Posterior vena cava (tissue), 2 donors: ENCODE measurements at regions of chr10 and their contacts with region 1.

Region 1: DNA sequence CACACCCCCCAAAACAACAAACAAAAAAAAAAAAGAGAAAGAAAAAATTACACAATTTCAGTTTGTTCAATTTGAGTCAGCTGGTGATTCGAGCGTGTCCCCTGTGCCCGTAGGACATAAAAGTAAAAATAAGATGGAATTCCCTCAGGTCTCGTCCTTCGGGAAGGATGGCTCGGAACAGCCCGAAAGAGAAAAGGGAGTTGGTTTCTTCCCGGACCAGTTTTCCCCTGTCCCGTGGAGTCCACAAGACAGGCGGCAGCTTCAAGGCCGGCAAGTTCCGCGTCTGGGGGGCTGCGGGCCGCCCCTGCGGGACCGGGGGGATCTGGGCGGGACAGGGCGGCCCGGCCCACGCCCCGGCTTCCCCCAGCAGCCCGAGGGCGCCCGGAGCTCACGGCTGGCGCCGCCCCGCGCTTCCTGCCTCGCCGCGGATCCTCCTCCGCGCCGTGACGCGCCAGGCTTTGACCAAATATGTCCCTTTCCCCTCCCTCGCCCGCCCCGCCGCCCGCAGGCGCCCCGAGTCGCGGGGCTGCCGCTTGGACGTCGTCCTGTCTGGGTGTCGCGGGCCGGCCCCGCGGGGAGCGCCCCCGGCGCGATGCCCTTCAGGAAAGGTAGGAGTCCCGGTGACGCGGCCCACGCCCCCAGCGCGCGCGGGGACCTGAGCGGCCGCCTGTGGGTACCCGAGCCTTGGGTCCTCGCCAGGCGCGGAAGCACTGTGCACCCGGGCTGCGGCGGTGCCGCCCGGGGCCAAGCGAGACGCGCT is 55.8 kb downstream of the RBM17 start:
- DNase-seq: peak; percentile 97

Region 2: DNA sequence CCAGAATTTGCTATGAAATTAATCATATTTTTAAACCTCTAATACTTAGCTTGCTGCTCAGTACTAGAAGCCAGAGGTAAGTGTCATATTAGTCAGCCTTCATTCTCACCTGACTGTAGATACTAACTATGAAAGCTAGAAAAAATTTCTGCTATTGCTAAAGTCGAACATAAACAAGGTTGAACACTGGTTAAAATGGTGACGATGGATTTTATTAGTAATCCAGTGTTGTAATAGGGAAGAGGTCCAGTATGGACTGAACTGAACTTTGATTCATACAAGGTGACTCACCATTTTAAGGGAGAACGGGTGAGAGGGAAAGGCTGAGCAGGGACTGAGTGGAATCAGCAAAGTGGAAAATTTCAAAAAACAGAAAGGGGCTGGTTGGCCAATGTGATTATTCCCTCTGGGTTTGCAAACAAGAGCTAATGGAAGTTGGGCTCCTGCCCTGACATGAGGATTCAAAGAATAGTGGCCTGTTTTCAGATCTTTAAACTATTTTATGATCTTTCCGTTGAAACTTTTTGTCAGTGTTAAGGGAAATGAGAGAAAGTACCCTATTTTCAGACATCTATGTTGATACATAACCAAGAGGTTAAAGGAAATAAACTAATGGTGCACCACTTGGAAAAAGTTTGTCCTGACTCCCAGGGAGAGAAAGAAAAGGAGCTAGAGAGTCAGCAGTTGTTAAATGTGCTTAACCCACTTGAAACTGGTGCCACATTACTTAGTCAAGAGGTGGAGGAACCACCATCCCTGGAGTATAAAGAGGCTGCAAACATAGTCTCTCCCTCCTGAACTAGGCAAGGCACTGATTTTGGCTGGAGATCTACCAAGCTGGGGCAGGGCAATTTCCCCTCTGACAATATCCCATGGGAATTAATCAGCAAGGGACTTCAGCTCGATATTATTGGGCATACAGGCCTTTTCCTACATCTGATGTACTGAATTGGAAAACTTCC is 1196.7 kb before region 1 on chr10:
- intact Hi-C with region 1: loop called in 1 of 2 experiments (anchors 5 kb)
- DNase-seq: no peak

Region 3: DNA sequence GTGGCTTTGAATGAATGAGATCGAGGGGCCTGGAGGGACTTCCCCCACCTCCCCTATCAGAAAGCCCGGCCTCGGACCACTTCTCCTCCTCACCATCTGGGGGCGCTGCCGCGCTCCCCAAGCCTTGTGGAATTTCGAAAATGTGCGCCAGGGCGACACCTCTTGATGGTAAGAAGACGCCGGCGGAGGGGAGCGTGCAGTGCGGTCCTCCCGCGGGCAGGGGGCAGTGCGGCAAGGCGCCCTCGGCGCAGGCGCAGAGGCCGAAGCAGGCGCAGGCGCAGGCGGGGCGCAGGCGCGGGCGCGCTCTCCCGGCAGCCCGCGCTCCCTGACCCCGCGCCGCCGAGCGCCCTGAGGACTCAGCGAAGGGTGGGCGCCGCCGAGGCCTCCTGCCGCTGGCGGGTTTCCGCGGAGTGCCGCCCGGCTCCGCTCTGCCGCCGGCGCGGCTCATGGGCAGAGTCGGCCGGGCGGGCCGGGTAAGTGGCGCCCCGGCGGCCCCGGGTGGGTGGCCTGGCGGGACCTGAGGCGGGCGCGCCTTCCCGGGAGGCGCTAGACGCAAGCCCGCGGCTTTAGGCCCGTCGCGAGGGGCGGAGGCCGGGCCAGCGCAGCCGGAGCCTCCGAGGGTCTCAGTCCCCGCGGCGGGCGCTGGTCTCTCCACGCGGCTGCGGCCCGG is 55.7 kb before region 1 on chr10 and contains the start of gene RBM17:
- intact Hi-C with region 1: loop called in 1 of 2 experiments (anchors 10 kb)
- DNase-seq: peak; percentile 99
- total RNA-seq, gene RBM17: 58.9 to 68.3 TPM

Region 4: GRCh38 chr10:6195846-6196245 is 51.3 kb after region 1 on chr10:
- intact Hi-C with region 1: loop called in 1 of 2 experiments (anchors 10 kb)
- DNase-seq: no peak